A549 (cell line): ENCODE measurements at regions of chr12 and their contacts with region 1.

Region 1: GRCh38 chr12:120200364-120200800 is 529 bp downstream of the RPLP0 start:
- DNase-seq: no peak
- ATAC-seq: no peak; a peak in 1 of 6 replicates
- H3K4me3 ChIP-seq: peak overlapping the region; percentile 93
- H3K27ac ChIP-seq: peak overlapping the region; percentile 92
- H3K4me1 ChIP-seq: peaks cover 38% of the 10 kb centered on the region
- CTCF ChIP-seq: no peak
- EP300 ChIP-seq: no peak
- POLR2A ChIP-seq: no peak
- RAD21 ChIP-seq: no peak

Region 2: GRCh38 chr12:119998471-119999245 is 201.7 kb before region 1 on chr12:
- CTCF ChIA-PET with region 1: no interaction called
- POLR2A ChIA-PET with region 1: no interaction called
- DNase-seq: no peak
- ATAC-seq: no peak; a peak in 1 of 6 replicates
- H3K4me3 ChIP-seq: no peak overlapping the region
- H3K27ac ChIP-seq: no peak overlapping the region
- H3K4me1 ChIP-seq: no peaks in the 10 kb centered on the region
- CTCF ChIP-seq: no peak
- EP300 ChIP-seq: no peak
- POLR2A ChIP-seq: no peak
- RAD21 ChIP-seq: no peak

Region 3: DNA sequence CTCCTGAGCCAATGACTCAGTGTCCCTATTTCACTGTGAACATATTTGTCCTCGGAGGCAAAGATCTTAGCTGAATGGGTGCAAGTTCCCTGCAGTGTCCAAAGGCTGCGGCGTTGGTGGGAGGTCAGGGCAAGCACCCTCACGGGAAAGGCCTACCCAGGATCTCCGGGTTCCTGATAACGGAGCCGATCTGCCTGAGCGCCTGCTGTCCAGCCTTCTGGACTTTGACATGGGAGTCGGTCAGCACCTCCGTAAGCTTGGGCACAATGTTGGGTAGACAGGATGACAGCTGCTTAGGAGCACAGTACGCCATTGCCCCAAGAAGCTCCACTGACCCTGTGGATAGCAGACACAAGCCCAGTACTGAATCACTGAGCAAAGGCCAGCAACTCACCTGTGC is 52.4 kb before region 1 on chr12:
- CTCF ChIA-PET with region 1: interaction called, 3 read pairs
- POLR2A ChIA-PET with region 1: interaction called, 11 read pairs
- DNase-seq: no peak
- ATAC-seq: no peak; a peak in 1 of 6 replicates
- H3K4me3 ChIP-seq: no peak overlapping the region
- H3K27ac ChIP-seq: no peak overlapping the region
- H3K4me1 ChIP-seq: no peaks in the 10 kb centered on the region
- CTCF ChIP-seq: no peak
- EP300 ChIP-seq: no peak
- POLR2A ChIP-seq: no peak
- RAD21 ChIP-seq: no peak

Region 4: GRCh38 chr12:120234643-120235368 is 34.4 kb after region 1 on chr12:
- CTCF ChIA-PET with region 1: interaction called, 308 read pairs
- POLR2A ChIA-PET with region 1: interaction called, 132 read pairs
- DNase-seq: peak; percentile 94 to 96
- ATAC-seq: peak; percentile 58 to 64
- H3K4me3 ChIP-seq: 0 out of 3 replicates have a peak overlapping the region, but pooled peaks have one; percentile 0
- H3K27ac ChIP-seq: peak overlapping the region; percentile 93 to 100
- H3K4me1 ChIP-seq: peaks cover 98% of the 10 kb centered on the region
- CTCF ChIP-seq: peak; percentile 39; the same call in 2 of the 3 replicates
- EP300 ChIP-seq: 0 out of 5 replicates have a peak, but pooled peaks of 1 of the 2 experiments have one; percentile 16
- POLR2A ChIP-seq: no peak
- RAD21 ChIP-seq: peak; percentile 54 to 56; a peak in 4 of 5 replicates

Region 5: GRCh38 chr12:120257041-120257821 is 56.8 kb after region 1 on chr12:
- CTCF ChIA-PET with region 1: interaction called, 5 read pairs
- POLR2A ChIA-PET with region 1: interaction called, 40 read pairs
- DNase-seq: no peak
- ATAC-seq: peak; percentile 47 to 51; a peak in 5 of 6 replicates
- H3K4me3 ChIP-seq: no peak overlapping the region
- H3K27ac ChIP-seq: peak overlapping the region; percentile 46 to 69; a peak in 5 of 6 replicates
- H3K4me1 ChIP-seq: peaks cover 57% of the 10 kb centered on the region
- CTCF ChIP-seq: no peak
- EP300 ChIP-seq: no peak
- POLR2A ChIP-seq: no peak
- RAD21 ChIP-seq: no peak

Region 6: GRCh38 chr12:120301962-120302815 is 101.8 kb after region 1 on chr12 and contains the start of gene SIRT4:
- CTCF ChIA-PET with region 1: interaction called, 3 read pairs
- POLR2A ChIA-PET with region 1: interaction called, 19 read pairs
- DNase-seq: peak; percentile 95 to 98
- ATAC-seq: peak; percentile 98 to 99
- H3K4me3 ChIP-seq: peak within 1 kb of the TSS; percentile 58
- H3K27ac ChIP-seq: peak within 1 kb of the TSS; percentile 63 to 74
- H3K4me1 ChIP-seq: peaks cover 3% of the 10 kb centered on the region; the same call in 1 of the 3 replicates
- CTCF ChIP-seq: peak; percentile 90
- EP300 ChIP-seq: no peak
- POLR2A ChIP-seq: no peak
- RAD21 ChIP-seq: peak; percentile 30 to 48; a peak in 2 of 5 replicates
- polyA plus RNA-seq, gene SIRT4: 1.6 and 2.6 TPM in 2 replicates